HEK293 (cell line): ENCODE measurements at regions of chr1 and their contacts with region 1.

Region 1: DNA sequence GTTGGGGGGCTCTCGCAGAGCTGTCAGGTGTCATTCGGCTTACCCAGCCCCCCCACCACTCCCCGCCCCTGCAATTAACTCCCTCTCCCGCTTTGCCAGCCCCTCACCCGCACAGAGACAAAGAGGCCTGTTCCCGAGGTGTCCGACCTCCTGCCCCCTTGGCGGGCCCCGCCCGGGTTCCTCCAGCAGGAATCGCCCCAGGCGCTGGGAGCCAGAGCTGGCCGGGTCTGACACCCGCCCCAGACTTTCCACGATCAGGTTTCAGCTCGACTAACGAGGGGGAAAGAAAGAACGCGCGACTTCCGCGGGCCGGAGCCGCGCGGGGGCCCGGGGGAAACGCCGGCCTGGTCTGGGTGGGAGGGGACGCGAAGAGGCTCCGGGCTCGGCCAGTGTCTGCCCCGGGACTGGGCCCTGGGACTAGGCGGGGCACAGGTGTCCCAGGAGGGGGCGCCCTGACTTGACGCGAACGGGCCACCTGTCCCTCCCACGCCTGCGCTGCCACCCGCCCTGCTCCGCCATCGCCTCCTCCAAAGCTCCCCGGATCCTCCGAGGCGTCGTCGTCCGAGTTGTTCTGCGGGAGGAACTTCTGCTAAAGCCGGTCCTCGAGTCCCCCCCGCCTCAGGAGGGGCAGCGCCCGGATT is 36.4 kb upstream of the HHAT start:
- H3K4me3 ChIP-seq: peak overlapping the region; percentile 33
- H3K27ac ChIP-seq: peak overlapping the region; percentile 78; the same call in 1 of the 2 replicates
- H3K4me1 ChIP-seq: peaks cover 20% of the 10 kb centered on the region
- CTCF ChIP-seq: peak; percentile 83

Region 2: DNA sequence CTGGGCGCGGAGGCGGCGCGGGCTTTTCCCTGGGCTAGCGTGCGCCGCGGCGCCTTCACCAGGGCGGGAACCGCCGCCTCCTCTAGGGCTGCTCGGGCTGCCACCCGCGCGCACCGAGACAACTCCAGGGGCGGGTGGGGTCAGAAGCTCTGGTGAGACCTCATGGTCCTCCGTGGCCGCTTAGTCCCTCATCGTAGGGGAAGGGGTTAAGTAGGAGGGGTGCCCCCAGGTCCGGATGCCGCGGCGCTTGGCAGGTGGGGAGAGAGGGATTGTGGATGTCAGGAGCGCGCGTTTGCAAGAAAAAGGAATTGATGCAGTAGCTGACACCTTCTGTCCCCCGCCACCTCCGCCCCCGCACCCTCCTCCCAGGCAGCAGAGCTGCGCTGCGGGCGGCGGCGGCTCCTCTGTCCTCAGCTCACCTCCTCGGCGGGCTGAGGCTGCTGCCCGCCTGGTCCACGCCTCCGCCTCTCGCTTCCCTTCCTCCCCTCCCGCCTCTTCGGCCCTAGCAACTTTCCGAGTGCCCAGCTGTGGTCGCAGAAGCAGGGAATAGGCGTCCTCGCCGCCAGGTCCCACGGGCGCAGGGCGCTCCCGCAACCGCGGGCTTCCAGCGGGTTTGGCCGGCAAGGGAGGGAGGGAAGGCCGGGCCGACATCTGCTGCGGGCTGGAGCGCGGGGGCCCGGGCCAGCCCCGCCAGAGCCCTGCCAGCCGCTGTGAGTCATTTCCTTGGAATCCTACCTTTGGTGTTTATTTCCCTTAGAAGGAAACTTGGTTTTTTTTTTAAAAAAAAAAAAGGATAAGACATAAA is 58.9 kb before region 1 on chr1:
- CTCF ChIA-PET with region 1: interaction called, 9 read pairs
- POLR2A ChIA-PET with region 1: interaction called, 12 read pairs
- H3K4me3 ChIP-seq: peak overlapping the region; percentile 96
- H3K27ac ChIP-seq: peak overlapping the region; percentile 99
- H3K4me1 ChIP-seq: peaks cover 40% of the 10 kb centered on the region
- CTCF ChIP-seq: no peak

Region 3: DNA sequence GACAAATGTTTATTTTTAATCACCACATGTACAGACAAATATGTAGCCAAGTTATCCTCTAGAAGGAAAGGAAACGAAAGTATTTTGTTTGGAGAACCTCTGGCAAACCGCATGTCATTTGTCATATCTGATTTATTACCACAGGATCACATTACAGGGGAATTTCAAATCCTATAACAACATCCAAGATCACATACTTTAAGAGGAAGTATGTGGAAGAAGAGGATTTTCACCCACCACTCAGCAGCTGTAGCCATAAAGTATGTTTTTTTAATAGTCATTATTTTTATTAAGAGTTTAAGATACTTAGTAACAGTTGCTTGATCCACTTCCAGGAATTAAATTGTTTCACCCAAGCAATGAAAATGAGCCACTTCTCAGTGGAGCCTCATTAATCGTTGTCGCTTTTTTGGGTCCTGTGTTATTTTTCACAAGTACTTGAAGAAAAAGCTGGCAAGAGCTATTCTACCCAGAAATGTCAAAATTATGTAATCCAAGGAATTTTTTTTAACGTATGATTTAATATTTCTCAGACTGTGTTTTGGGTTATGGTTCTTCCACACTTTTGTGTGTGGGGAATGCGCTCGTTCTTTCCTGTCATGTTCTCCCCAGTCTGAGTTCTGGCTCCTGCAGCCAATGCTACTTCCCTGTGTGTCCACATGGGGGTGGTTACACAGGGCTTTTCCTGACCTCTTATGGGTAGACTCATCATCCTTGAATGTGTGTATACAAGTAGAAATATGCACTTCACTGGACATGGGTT is 52.8 kb before region 1 on chr1:
- CTCF ChIA-PET with region 1: interaction called, 11 read pairs
- POLR2A ChIA-PET with region 1: interaction called, 12 read pairs
- H3K4me3 ChIP-seq: no peak overlapping the region
- H3K27ac ChIP-seq: no peak overlapping the region
- H3K4me1 ChIP-seq: peaks cover 43% of the 10 kb centered on the region
- CTCF ChIP-seq: no peak; the same call in 1 of the 2 replicates

Region 4: DNA sequence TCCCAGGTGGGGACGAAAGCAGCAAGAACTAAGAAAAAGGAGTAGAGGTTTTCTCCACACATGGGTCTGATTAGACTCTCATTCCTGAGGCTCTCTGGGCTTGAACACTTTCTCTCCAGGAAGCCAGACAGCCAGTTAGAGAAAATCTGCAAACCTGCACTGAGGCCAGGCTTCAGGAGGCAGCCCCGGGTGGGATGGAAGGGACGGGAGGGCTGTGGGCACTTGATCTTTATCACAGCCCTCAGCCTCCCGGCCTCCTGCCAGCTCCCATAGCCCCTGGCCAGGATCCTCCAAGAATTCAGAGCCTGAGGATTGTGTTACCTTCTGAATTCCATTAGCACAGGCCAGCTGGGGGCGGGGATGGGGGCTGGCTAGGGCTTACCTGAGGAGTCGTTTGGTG is 19.7 kb before region 1 on chr1:
- CTCF ChIA-PET with region 1: interaction called, 12 read pairs
- POLR2A ChIA-PET with region 1: interaction called, 6 read pairs
- H3K4me3 ChIP-seq: no peak overlapping the region
- H3K27ac ChIP-seq: no peak overlapping the region
- H3K4me1 ChIP-seq: peaks cover 11% of the 10 kb centered on the region; the same call in 1 of the 2 replicates
- CTCF ChIP-seq: no peak